A549 (cell line): ENCODE measurements at regions of chr19 and their contacts with region 1.

Region 1: DNA sequence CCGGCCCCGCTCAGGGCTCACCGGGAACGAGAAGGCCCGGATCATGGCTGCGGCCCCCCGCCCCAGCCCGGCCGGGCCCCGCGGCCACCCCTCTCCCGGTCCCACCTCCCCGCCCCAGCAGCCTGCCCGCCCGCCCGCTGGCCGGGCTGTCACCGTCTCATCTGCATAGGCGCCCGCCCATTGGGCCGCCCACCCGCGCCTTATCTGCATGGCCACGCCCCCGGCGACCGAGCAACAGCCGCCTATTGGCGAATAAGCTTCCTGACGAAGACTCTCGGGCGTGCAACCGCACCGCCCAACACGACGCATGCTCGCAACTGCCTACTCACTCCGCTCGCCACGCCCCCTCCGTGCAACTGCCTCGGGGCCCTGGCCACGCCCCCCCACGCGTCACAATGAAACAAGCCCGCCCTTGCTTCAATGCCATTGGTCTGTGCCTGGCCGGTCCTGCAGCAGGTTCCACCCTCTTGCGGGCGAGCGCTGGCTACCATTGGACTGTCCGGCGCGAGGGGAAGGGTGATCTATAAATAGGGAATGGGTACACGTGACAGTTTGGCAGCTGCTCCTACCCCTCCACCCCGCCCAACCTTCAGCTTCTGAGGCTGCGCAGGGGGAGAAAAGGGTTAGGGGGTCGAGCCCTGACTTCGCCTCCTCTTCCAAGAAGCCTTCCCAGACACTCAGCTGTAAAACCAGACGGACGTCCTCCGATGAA is at the start of gene DACT3:
- DNase-seq: peak; percentile 100
- ATAC-seq: peak; percentile 84 to 95
- H3K4me3 ChIP-seq: peak within 1 kb of the TSS; percentile 44
- H3K27ac ChIP-seq: peak within 1 kb of the TSS in 1 of 2 experiments; percentile 38; a peak in 2 of 6 replicates
- H3K4me1 ChIP-seq: peaks cover 20% of the 10 kb centered on the region
- CTCF ChIP-seq: no peak
- EP300 ChIP-seq: no peak
- POLR2A ChIP-seq: no peak
- RAD21 ChIP-seq: no peak
- polyA plus RNA-seq, gene DACT3: 0.13 and 0.36 TPM in 2 replicates

Region 2: DNA sequence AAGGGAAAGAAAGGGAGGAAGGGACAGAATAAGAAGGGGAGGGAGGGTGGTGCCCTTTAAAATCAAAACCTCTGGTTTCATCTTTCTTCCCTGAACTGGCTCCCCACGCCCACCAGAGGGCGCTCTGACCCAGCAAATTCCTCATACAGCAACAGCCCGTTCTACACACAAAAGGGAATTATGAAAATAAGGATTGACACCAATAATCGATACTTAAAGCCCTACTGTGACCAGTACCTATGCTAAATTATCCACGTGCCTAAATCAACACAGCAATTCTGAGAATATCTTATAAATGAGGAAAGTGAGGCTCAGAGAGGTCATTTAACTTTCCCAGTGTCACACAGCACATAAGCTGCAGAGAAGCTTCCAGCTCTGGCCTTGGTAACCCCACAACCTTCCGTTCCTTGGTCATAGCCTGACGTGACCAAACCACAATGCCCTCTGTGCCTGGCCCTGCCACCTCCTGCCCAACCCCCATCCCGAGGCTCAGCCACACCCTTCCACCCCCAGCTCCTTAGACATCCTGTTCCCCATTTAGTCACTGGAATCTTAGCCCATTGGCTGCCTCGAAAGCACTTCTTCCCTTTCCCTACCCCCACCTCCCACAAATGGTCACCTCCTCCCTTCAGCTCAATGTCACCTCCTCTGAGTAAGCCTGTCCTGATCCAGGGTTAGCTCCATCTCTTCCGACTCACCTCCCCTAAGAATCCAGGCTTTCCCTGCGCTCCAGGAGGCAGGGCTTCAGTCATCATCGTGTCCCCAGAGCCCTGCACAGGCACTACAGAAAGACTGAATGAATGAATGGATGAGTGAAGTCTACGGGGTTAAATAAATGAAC is 131.3 kb before region 1 on chr19:
- CTCF ChIA-PET with region 1: interaction called, 36 read pairs
- POLR2A ChIA-PET with region 1: no interaction called
- DNase-seq: peak; percentile 69 to 89
- ATAC-seq: peak; percentile 63 to 84; a peak in 5 of 6 replicates
- H3K4me3 ChIP-seq: no peak overlapping the region
- H3K27ac ChIP-seq: peak overlapping the region in 1 of 2 experiments; percentile 36; a peak in 2 of 6 replicates
- H3K4me1 ChIP-seq: peaks cover 10% of the 10 kb centered on the region; the same call in 1 of the 3 replicates
- CTCF ChIP-seq: peak; percentile 100
- EP300 ChIP-seq: no peak
- POLR2A ChIP-seq: no peak
- RAD21 ChIP-seq: peak; percentile 96 to 97

Region 3: DNA sequence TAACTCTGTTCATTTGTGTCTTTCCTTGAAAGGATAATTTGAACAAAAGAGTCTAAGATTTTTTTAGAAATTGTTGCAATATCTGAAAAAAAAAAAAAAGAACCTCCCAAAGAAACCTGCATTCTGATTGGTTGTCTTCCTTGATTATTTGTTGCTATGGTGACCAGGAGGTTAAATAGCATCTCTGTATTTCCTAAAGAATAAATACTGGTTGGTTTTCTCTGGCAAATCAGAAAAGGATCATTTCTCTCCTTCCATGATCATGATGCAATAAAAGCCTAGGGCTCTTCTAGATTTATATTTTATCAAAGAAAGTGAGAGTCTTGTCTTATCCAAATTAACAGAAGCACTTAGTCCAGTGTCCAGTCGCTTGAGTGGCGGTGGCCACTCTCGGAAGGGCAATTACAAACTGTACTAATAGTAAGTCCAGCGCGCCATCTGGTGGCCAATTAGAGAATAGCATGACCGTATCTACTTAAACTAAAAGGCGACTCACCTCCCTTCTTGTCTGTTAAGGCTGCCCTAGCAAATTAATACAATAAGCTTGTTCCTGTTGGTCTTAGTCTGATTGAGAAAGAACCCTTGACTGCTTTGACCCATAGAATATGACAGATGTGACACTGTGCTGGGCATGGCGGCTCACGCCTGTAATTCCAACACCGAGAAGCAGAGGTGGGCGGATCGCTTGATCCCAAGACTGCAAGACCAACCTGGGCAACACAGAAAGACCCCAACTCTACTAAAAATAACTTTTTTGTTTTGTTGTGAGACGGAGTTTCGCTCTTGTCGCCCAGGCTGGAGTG is 118.5 kb before region 1 on chr19:
- CTCF ChIA-PET with region 1: interaction called, 10 read pairs
- POLR2A ChIA-PET with region 1: no interaction called
- DNase-seq: peak; percentile 69 to 94
- ATAC-seq: peak; percentile 90 to 92
- H3K4me3 ChIP-seq: no peak overlapping the region
- H3K27ac ChIP-seq: no peak overlapping the region
- H3K4me1 ChIP-seq: no peaks in the 10 kb centered on the region
- CTCF ChIP-seq: peak; percentile 98
- EP300 ChIP-seq: no peak
- POLR2A ChIP-seq: no peak
- RAD21 ChIP-seq: peak; percentile 91 to 93

Region 4: GRCh38 chr19:46634045-46634655 is 27.0 kb before region 1 on chr19:
- CTCF ChIA-PET with region 1: interaction called, 200 read pairs
- POLR2A ChIA-PET with region 1: no interaction called
- DNase-seq: peak; percentile 96 to 97
- ATAC-seq: peak; percentile 31 to 75
- H3K4me3 ChIP-seq: peak overlapping the region; percentile 53
- H3K27ac ChIP-seq: peak overlapping the region; percentile 48 to 69; a peak in 5 of 6 replicates
- H3K4me1 ChIP-seq: peaks cover 21% of the 10 kb centered on the region
- CTCF ChIP-seq: no peak
- EP300 ChIP-seq: no peak
- POLR2A ChIP-seq: no peak
- RAD21 ChIP-seq: no peak

Region 5: DNA sequence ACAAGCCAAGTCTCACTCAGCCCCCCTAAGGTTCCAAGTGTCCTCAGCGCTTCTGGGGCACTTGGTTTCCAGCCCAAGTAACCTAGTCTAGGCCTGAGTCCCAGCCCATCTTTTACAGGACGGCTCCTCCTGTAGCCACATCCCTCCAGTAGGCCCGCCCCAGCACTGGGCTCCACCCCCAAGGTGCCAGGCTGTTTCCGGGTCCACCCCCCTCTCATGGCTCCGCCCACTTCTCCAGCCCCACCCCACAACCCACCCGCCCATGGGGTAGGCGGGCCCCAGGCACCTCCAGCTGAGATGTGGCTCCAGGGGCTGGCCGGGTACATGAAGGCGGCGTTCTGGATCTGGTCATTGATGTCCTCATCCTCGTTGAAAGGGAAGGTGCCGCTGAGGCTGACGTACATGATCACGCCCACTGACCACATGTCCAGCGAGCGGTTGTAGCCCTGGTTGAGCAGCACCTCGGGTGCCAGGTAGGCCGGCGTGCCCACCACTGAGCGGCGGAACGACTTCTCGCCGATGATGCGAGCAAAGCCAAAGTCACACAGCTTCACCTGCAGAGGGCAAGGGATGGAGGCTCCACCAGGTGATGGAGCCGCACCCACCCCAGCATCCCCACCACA is 17.0 kb after region 1 on chr19:
- CTCF ChIA-PET with region 1: interaction called, 100 read pairs
- POLR2A ChIA-PET with region 1: interaction called, 4 read pairs
- DNase-seq: peak; percentile 64
- ATAC-seq: peak; percentile 64 to 84
- H3K4me3 ChIP-seq: no peak overlapping the region
- H3K27ac ChIP-seq: no peak overlapping the region
- H3K4me1 ChIP-seq: no peaks in the 10 kb centered on the region
- CTCF ChIP-seq: no peak
- EP300 ChIP-seq: no peak
- POLR2A ChIP-seq: no peak
- RAD21 ChIP-seq: no peak

Region 6: DNA sequence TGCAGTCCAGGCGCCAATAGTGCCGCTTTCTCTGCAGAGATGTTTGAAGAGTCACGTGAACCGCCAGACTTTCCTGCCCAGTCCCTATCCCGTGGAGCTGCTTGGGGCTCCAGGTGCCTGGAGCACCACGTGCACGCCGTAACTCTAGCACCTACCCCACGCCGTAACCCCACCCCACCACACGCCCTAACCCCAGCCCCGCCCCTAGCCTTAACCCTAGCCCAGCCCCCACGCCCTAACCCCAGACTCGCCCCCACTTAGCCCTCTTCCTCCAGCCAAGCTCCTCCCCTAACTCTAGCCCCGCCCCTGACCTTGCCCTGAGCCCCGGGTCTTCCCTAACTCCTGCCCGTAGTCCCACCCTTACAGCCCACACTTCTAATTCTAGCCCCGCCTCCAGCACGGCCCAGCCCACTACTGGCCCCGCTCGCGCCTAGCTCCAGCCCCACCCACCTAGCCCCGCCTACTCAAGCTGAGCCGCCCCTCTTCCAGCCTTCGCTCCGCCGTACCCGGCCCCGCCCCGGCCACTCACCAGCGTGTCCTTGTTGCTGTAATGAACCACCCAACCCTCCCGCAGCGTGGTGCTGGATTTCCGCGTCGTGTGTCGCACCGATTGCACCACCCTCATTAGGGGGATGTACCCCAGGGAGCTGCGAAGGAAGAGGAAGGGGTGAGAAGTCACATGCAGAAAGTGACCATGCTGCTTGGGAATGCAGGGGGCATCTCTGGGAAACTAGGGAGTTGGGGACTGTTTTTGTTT is 36.2 kb after region 1 on chr19:
- CTCF ChIA-PET with region 1: interaction called, 20 read pairs
- POLR2A ChIA-PET with region 1: no interaction called
- DNase-seq: peak; percentile 82 to 84
- ATAC-seq: peak; percentile 86 to 97
- H3K4me3 ChIP-seq: no peak overlapping the region
- H3K27ac ChIP-seq: peak overlapping the region in 1 of 2 experiments; percentile 39; a peak in 1 of 6 replicates
- H3K4me1 ChIP-seq: peaks cover 6% of the 10 kb centered on the region; the same call in 1 of the 3 replicates
- CTCF ChIP-seq: no peak
- EP300 ChIP-seq: no peak
- POLR2A ChIP-seq: no peak
- RAD21 ChIP-seq: no peak

Region 7: GRCh38 chr19:46728693-46729676 is 67.8 kb after region 1 on chr19:
- CTCF ChIA-PET with region 1: interaction called, 48 read pairs
- POLR2A ChIA-PET with region 1: interaction called, 3 read pairs
- DNase-seq: peak; percentile 72 to 92
- ATAC-seq: peak; percentile 61 to 89
- H3K4me3 ChIP-seq: no peak overlapping the region
- H3K27ac ChIP-seq: peak overlapping the region in 1 of 2 experiments; percentile 22; a peak in 1 of 6 replicates
- H3K4me1 ChIP-seq: peaks cover 40% of the 10 kb centered on the region
- CTCF ChIP-seq: peak; percentile 97
- EP300 ChIP-seq: no peak
- POLR2A ChIP-seq: no peak
- RAD21 ChIP-seq: peak; percentile 73 to 76